ENCODE measurements at regions of chr6 and their contacts with region 1.

Region 1: GRCh38 chr6:136751522-136751956 is 40.7 kb downstream of the MAP3K5 start:
- DNase-seq: peak; percentile 55
- H3K4me3 Mint-ChIP-seq: peak overlapping the region; percentile 23
- H3K27ac Mint-ChIP-seq: peak overlapping the region; percentile 74
- H3K4me1 Mint-ChIP-seq: peaks cover 67% of the 10 kb centered on the region
- H3K27me3 Mint-ChIP-seq: no peaks in the 10 kb centered on the region

Region 2: GRCh38 chr6:136158387-136158821 is 593.1 kb before region 1 on chr6:
- CTCF ChIA-PET with region 1: no interaction called
- intact Hi-C with region 1: no loop called
- DNase-seq: no peak
- H3K4me3 Mint-ChIP-seq: no peak overlapping the region
- H3K27ac Mint-ChIP-seq: no peak overlapping the region
- H3K4me1 Mint-ChIP-seq: no peaks in the 10 kb centered on the region
- H3K27me3 Mint-ChIP-seq: no peaks in the 10 kb centered on the region

Region 3: DNA sequence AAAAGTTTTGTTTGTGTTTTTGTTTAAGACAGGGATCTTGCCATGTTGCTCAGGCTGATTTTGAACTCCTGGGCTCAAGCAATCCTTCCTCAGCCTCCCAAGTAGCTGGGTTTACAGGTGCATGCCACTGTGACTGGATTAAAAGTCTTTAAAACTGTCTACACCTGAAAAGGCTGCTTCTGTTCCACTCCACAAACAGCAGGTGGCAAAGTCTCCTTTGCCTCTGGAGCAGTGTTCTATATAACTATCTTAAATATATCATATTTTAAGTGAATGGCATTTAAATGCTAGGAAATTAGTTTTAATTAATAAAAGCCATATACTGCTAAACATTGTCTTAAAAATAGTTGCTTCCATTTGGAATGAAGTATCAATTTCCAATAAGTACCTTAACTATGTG is 372.7 kb before region 1 on chr6:
- CTCF ChIA-PET with region 1: no interaction called
- intact Hi-C with region 1: no loop called
- DNase-seq: no peak
- H3K4me3 Mint-ChIP-seq: no peak overlapping the region
- H3K27ac Mint-ChIP-seq: no peak overlapping the region
- H3K4me1 Mint-ChIP-seq: no peaks in the 10 kb centered on the region
- H3K27me3 Mint-ChIP-seq: no peaks in the 10 kb centered on the region

Region 4: GRCh38 chr6:136539967-136540652 is 211.4 kb before region 1 on chr6:
- CTCF ChIA-PET with region 1: no interaction called
- intact Hi-C with region 1: no loop called
- DNase-seq: no peak
- H3K4me3 Mint-ChIP-seq: no peak overlapping the region
- H3K27ac Mint-ChIP-seq: no peak overlapping the region
- H3K4me1 Mint-ChIP-seq: no peaks in the 10 kb centered on the region
- H3K27me3 Mint-ChIP-seq: peaks cover 19% of the 10 kb centered on the region

Region 5: GRCh38 chr6:136593748-136594490 is 157.6 kb before region 1 on chr6:
- CTCF ChIA-PET with region 1: no interaction called
- intact Hi-C with region 1: loop called (anchors 2 kb)
- DNase-seq: peak; percentile 79
- H3K4me3 Mint-ChIP-seq: peak overlapping the region; percentile 27
- H3K27ac Mint-ChIP-seq: peak overlapping the region; percentile 83
- H3K4me1 Mint-ChIP-seq: peaks cover 19% of the 10 kb centered on the region
- H3K27me3 Mint-ChIP-seq: no peaks in the 10 kb centered on the region

Region 6: DNA sequence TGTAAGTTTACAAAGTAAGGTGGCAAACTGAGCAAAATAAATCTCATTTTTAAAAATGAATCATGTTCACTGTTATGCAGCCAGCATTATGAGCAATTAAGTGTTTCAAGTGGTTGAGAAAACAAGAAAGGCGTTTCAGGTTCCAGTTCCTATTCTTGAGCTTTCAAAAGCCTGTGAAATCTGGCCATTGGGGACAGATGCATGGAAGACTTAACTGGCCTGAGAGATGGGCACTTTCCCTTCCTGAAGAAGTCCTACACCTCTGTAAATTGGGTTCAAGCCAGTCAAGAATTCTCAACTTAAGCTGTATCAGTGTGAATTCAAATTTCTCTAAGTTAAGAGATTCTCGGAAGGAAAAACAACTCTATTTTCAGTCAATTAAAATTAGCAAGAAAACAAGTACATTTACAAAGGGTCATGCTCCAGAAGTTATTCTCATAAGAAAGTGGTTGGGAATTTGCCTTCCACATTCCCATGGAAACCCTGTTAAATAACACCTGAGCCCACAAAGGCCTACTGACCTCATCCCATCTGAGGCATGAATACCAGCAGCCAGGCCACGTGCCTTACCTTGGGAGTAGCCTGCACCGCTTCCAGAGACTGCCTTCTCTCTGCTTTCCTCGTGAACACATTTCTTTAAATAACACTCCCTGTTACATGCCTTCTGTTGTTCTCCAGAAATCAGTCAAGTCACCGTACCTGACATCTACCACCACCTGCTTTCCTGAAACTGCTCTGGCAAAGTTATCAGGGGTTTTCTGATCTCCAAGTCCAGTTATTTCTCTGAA is 21.3 kb after region 1 on chr6:
- CTCF ChIA-PET with region 1: interaction called, 5 read pairs
- intact Hi-C with region 1: loop called (anchors 1 kb)
- DNase-seq: no peak
- H3K4me3 Mint-ChIP-seq: no peak overlapping the region
- H3K27ac Mint-ChIP-seq: no peak overlapping the region
- H3K4me1 Mint-ChIP-seq: peaks cover 39% of the 10 kb centered on the region
- H3K27me3 Mint-ChIP-seq: no peaks in the 10 kb centered on the region